ENCODE measurements at regions of chr11 and their contacts with region 1.

Region 1: DNA sequence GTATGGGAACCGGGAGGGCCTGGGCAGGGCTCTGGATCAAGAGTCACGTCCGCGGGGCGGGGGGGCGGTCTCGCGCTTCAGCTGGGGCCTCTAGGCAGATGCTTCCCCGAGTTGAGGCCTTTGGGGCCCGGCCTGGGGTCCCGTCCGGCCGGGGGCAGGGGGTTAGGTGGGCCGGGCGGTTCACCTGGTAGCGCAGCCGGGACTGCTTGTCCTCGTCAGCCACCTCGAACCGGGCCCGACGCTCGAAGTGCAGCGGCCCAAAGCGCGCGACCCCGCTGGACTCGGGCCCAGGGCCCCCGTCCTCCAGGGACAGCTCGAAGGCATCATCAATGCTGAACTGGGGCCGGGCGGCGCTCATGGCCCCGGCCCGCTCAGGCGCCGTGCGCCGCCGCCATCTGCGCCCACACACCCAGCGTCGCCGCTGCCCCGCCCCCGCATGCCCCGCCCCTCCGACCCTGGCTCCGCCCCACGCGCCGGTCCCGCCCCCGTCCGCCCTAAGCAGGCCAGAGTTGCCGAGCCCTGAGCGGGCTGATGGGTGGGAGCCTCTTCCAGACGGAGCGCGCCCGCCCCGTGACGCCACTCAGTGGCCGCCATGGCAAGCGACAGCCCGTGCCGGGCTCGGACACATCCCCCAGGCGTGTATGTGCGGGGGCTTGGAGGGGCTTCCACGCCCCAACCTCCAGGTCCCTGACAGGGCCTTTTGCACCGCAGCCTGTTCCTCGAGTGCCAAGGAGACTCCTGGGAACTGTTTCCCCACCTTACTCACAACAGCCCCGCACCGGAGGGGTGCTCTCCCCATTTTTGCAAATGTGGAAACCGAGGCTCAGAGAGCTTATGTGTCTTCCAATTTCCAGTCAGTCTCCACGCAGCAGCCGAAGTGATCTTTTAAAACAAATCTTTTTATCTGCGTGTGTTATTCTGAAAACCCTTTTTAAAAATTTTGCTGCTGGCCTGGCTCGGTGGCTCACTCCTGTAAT is at the start of gene TMEM134:
- DNase-seq: peak; percentile 96 to 98
- ATAC-seq: peak; percentile 95
- H3K4me3 ChIP-seq: peak within 1 kb of the TSS; percentile 74 to 90
- H3K27ac ChIP-seq: peak within 1 kb of the TSS; percentile 29 to 46
- H3K4me1 ChIP-seq: no peaks in the 10 kb centered on the region
- H3K27me3 ChIP-seq: no peaks in the 10 kb centered on the region
- total RNA-seq, gene TMEM134: 34.1 to 37.6 TPM

Region 2: GRCh38 chr11:67006139-67006884 is 462.8 kb before region 1 on chr11:
- intact Hi-C with region 1: no loop called
- DNase-seq: no peak
- ATAC-seq: no peak
- H3K4me3 ChIP-seq: no peak overlapping the region
- H3K27ac ChIP-seq: no peak overlapping the region
- H3K4me1 ChIP-seq: no peaks in the 10 kb centered on the region
- H3K27me3 ChIP-seq: no peaks in the 10 kb centered on the region

Region 3: GRCh38 chr11:67158221-67158620 is 310.9 kb before region 1 on chr11:
- intact Hi-C with region 1: no loop called
- DNase-seq: no peak
- ATAC-seq: no peak
- H3K4me3 ChIP-seq: no peak overlapping the region
- H3K27ac ChIP-seq: no peak overlapping the region
- H3K4me1 ChIP-seq: peaks cover 0 to 2% of the 10 kb centered on the region in 2 donors
- H3K27me3 ChIP-seq: no peaks in the 10 kb centered on the region

Region 4: GRCh38 chr11:67401495-67402191 is 67.5 kb before region 1 on chr11 and contains the start of gene PPP1CA:
- intact Hi-C with region 1: loop called (anchors 5 kb)
- DNase-seq: peak; percentile 94 to 97
- ATAC-seq: peak; percentile 95
- H3K4me3 ChIP-seq: peak within 1 kb of the TSS; percentile 60 to 66
- H3K27ac ChIP-seq: peak within 1 kb of the TSS in 1 of 2 donors; percentile 75
- H3K4me1 ChIP-seq: no peaks in the 10 kb centered on the region
- H3K27me3 ChIP-seq: no peaks in the 10 kb centered on the region
- total RNA-seq, gene PPP1CA: 61.7 to 64.8 TPM

Region 5: DNA sequence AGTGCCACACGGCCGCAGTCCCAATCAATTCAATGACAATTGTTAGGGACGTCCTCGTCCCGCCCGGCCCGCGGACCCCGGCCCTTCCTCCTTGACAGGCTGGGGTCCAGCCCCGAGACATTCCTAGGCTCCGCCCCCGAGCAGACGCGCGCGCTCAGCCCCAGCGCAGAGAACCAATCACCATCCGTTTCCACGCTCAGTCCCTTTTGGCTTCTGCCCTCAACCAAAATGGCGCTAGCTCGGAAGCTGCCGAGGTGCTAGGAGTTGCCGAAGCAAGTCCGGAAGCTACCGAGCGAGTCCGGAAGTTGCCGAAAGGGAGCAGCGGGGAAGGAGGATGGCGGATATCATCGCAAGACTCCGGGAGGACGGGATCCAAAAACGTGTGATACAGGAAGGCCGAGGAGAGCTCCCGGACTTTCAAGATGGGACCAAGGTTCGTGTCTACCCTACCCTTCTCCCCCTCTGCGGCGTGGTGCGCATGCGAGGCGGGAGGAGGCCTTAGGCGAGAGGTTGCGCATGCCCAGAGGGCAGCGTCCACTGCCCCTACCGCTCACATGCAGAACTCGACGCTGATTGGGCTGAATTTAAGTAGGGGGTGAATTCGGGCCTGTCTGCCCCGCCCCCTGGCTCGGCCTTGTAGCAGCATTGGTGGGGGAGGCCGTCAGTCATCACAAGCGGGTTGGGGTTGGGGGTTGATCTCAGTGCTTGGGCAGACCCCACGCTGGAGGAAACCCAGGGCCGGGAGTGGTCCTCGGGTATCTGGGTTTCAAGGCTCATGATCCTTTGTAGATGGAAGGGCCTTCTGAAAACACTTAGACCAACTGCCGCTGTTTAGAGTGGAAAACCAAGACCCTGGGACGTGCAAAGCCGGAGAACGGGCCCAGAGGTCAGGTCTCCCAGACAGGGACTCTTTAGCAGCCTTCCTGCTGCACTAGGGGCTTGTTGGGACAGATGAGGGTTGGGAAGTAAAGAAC is 14.0 kb after region 1 on chr11 and contains the start of gene AIP:
- intact Hi-C with region 1: no loop called
- DNase-seq: peak; percentile 98
- ATAC-seq: peak; percentile 98
- H3K4me3 ChIP-seq: peak within 1 kb of the TSS; percentile 2 to 49
- H3K27ac ChIP-seq: peak within 1 kb of the TSS in 1 of 2 donors; percentile 14
- H3K4me1 ChIP-seq: peaks cover 0 to 3% of the 10 kb centered on the region in 2 donors
- H3K27me3 ChIP-seq: no peaks in the 10 kb centered on the region
- total RNA-seq, gene AIP: 61.2 to 63.1 TPM

Measured in aorta (tissue), 5 donors.